T-cell (primary cell): ENCODE measurements at regions of chr13 and their contacts with region 1.

Region 1: DNA sequence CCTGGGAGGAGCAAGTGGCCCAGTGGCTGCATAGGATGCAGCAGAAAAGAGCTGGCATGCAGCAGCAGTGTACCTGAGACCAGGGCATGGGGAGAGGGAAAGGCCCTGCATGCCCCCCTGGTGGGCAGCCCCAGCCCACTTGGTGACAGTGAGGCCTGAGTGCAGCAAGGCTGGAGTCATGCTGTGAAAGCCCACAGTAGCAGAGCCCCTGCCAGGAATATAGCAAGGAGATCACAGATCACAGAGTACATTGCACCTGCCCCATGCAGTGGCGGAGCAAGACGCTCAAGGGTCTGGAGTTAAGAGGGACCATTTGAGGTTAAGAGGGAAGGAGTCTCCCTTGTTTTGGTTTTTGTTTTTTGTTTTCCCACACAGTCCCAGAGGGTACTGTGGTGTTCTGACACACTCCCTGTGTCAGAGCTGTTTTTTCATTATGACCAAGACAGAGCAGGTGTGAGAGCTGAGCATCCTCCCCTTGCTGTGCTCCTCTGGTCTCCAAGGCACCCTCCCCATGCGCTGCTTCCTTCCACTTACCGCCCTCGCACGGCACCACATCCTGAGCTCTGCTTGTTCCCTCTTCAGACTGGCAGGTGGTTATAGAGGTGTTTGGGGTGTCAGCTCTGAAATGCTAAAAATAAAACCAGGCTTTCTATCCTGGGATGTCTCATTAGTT is 85.0 kb upstream of the UBL3 start:
- DNase-seq: peak; percentile 59 to 87 (median 76)
- ATAC-seq: peak; percentile 93 to 95 (median 93)
- H3K4me3 ChIP-seq: peak overlapping the region; percentile 44 to 61
- H3K4me3 Mint-ChIP-seq: peak overlapping the region; percentile 87 to 90 (median 87)
- H3K27ac ChIP-seq: peak overlapping the region; percentile 53
- H3K27ac Mint-ChIP-seq: peak overlapping the region; percentile 92 to 93
- H3K4me1 ChIP-seq: peaks cover 31 to 52% of the 10 kb centered on the region in 2 experiments
- H3K4me1 Mint-ChIP-seq: peaks cover 46 to 59% (median 57%) of the 10 kb centered on the region in 3 donors
- H3K27me3 ChIP-seq: no peaks in the 10 kb centered on the region
- H3K27me3 Mint-ChIP-seq: no peaks in the 10 kb centered on the region

Region 2: GRCh38 chr13:29850224-29850898 is 85.1 kb before region 1 on chr13 and contains the start of gene UBL3:
- CTCF ChIA-PET with region 1: interaction called, 5 to 11 read pairs
- POLR2A ChIA-PET with region 1: interaction called, 8 to 9 read pairs
- DNase-seq: peak; percentile 86 to 97 (median 94)
- ATAC-seq: peak; percentile 92 to 94 (median 92)
- H3K4me3 ChIP-seq: peak within 1 kb of the TSS; percentile 96 to 99
- H3K4me3 Mint-ChIP-seq: peak within 1 kb of the TSS; percentile 93 to 98 (median 97)
- H3K27ac ChIP-seq: peak within 1 kb of the TSS; percentile 94
- H3K27ac Mint-ChIP-seq: peak within 1 kb of the TSS; percentile 98 to 99
- H3K4me1 ChIP-seq: peaks cover 0 to 17% of the 10 kb centered on the region in 2 experiments
- H3K4me1 Mint-ChIP-seq: peaks cover 31 to 33% (median 31%) of the 10 kb centered on the region in 3 donors
- H3K27me3 ChIP-seq: no peaks in the 10 kb centered on the region
- H3K27me3 Mint-ChIP-seq: no peaks in the 10 kb centered on the region
- total RNA-seq, gene UBL3: 32.7 to 42.1 (median 34.6) TPM

Region 3: GRCh38 chr13:29923554-29924481 is 11.6 kb before region 1 on chr13:
- CTCF ChIA-PET with region 1: interaction called, 6 to 14 read pairs
- POLR2A ChIA-PET with region 1: no interaction called
- DNase-seq: peak in 29 of 35 experiments; percentile 4 to 65 (median 29)
- ATAC-seq: peak; percentile 56 to 75 (median 70)
- H3K4me3 ChIP-seq: no peak overlapping the region
- H3K4me3 Mint-ChIP-seq: no peak overlapping the region
- H3K27ac ChIP-seq: no peak overlapping the region
- H3K27ac Mint-ChIP-seq: peak overlapping the region in 1 of 2 donors; percentile 30
- H3K4me1 ChIP-seq: peaks cover 12 to 18% of the 10 kb centered on the region in 2 experiments
- H3K4me1 Mint-ChIP-seq: peaks cover 11 to 27% (median 24%) of the 10 kb centered on the region in 3 donors
- H3K27me3 ChIP-seq: peaks cover 0 to 2% of the 10 kb centered on the region in 2 experiments
- H3K27me3 Mint-ChIP-seq: peaks cover 0 to 2% of the 10 kb centered on the region in 2 donors

Region 4: GRCh38 chr13:29954082-29955028 is 18.9 kb after region 1 on chr13:
- CTCF ChIA-PET with region 1: interaction called, 4 to 25 read pairs
- POLR2A ChIA-PET with region 1: interaction called, 3 to 9 read pairs
- DNase-seq: peak; percentile 29 to 75 (median 50)
- ATAC-seq: peak; percentile 77 to 90 (median 85)
- H3K4me3 ChIP-seq: peak overlapping the region; percentile 7 to 47
- H3K4me3 Mint-ChIP-seq: peak overlapping the region; percentile 72 to 80 (median 74)
- H3K27ac ChIP-seq: peak overlapping the region; percentile 69
- H3K27ac Mint-ChIP-seq: peak overlapping the region; percentile 87 to 88
- H3K4me1 ChIP-seq: peaks cover 34 to 36% of the 10 kb centered on the region in 2 experiments
- H3K4me1 Mint-ChIP-seq: peaks cover 58 to 74% (median 65%) of the 10 kb centered on the region in 3 donors
- H3K27me3 ChIP-seq: no peaks in the 10 kb centered on the region
- H3K27me3 Mint-ChIP-seq: peaks cover 0 to 3% of the 10 kb centered on the region in 2 donors

Region 5: DNA sequence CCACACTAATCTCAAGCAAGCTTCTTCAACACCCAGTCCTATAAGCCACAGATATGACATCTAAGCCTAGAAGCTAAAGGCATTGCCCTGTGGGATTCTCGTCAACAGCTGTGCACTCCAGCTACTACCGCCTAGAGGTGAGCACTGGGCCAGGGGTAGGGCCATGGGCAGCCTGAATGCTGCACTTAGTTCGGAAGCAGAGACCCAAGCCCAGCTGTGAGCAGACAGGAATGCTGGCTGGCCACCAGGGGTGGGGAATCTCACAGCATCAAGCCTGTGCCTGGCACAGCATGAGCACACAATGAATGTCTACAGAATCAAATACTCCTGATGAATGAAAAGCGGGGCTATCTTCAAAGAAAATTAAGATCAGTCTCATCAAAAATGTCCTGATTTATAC is 82.4 kb after region 1 on chr13:
- CTCF ChIA-PET with region 1: no interaction called
- POLR2A ChIA-PET with region 1: no interaction called
- DNase-seq: no peak
- ATAC-seq: no peak
- H3K4me3 ChIP-seq: no peak overlapping the region
- H3K4me3 Mint-ChIP-seq: no peak overlapping the region
- H3K27ac ChIP-seq: no peak overlapping the region
- H3K27ac Mint-ChIP-seq: no peak overlapping the region
- H3K4me1 ChIP-seq: no peaks in the 10 kb centered on the region
- H3K4me1 Mint-ChIP-seq: peaks cover 6 to 8% (median 8%) of the 10 kb centered on the region in 3 donors
- H3K27me3 ChIP-seq: peaks cover 0 to 14% of the 10 kb centered on the region in 2 experiments
- H3K27me3 Mint-ChIP-seq: peaks cover 3 to 6% of the 10 kb centered on the region in 2 donors

Region 6: GRCh38 chr13:30114571-30115256 is 179.3 kb after region 1 on chr13:
- CTCF ChIA-PET with region 1: interaction called, 7 to 33 read pairs
- POLR2A ChIA-PET with region 1: interaction called in 1 of 2 experiments, 4 read pairs
- DNase-seq: peak; percentile 78 to 96 (median 91)
- ATAC-seq: peak; percentile 89 to 95 (median 94)
- H3K4me3 ChIP-seq: peak overlapping the region; percentile 38 to 47
- H3K4me3 Mint-ChIP-seq: peak overlapping the region; percentile 79 to 80 (median 79)
- H3K27ac ChIP-seq: peak overlapping the region; percentile 37
- H3K27ac Mint-ChIP-seq: peak overlapping the region; percentile 49 to 82
- H3K4me1 ChIP-seq: peaks cover 10 to 26% of the 10 kb centered on the region in 2 experiments
- H3K4me1 Mint-ChIP-seq: peaks cover 30 to 38% (median 38%) of the 10 kb centered on the region in 3 donors
- H3K27me3 ChIP-seq: peaks cover 0 to 2% of the 10 kb centered on the region in 2 experiments
- H3K27me3 Mint-ChIP-seq: no peaks in the 10 kb centered on the region

Region 7: DNA sequence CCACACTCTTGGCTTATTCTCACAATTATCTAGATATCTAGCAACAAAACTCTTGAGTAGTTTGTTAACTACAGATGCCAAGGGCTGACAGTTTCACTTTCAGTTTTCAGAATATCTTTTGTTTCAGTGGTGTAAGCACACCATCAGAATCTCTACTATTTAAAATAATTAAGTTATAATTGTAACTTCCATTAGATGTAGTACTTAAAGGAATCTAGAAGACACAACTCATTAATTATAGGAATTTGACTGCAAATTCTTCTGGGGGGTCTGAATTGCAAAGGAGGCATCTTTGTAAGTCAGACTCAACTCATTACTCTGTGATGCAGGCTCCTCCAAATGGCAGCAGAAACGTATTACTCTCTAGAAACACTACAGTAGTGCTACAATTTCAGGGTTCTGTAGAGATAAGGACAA is 637.4 kb after region 1 on chr13:
- CTCF ChIA-PET with region 1: no interaction called
- POLR2A ChIA-PET with region 1: interaction called in 1 of 2 experiments, 12 read pairs
- DNase-seq: peak in 12 of 35 experiments; percentile 6 to 63 (median 18)
- ATAC-seq: peak; percentile 71 to 75 (median 72)
- H3K4me3 ChIP-seq: peak overlapping the region; percentile 38 to 44
- H3K4me3 Mint-ChIP-seq: peak overlapping the region; percentile 69 to 78 (median 71)
- H3K27ac ChIP-seq: peak overlapping the region; percentile 90
- H3K27ac Mint-ChIP-seq: peak overlapping the region; percentile 93 to 95
- H3K4me1 ChIP-seq: peaks cover 11 to 17% of the 10 kb centered on the region in 2 experiments
- H3K4me1 Mint-ChIP-seq: peaks cover 29 to 39% (median 39%) of the 10 kb centered on the region in 3 donors
- H3K27me3 ChIP-seq: no peaks in the 10 kb centered on the region
- H3K27me3 Mint-ChIP-seq: no peaks in the 10 kb centered on the region

Region 8: DNA sequence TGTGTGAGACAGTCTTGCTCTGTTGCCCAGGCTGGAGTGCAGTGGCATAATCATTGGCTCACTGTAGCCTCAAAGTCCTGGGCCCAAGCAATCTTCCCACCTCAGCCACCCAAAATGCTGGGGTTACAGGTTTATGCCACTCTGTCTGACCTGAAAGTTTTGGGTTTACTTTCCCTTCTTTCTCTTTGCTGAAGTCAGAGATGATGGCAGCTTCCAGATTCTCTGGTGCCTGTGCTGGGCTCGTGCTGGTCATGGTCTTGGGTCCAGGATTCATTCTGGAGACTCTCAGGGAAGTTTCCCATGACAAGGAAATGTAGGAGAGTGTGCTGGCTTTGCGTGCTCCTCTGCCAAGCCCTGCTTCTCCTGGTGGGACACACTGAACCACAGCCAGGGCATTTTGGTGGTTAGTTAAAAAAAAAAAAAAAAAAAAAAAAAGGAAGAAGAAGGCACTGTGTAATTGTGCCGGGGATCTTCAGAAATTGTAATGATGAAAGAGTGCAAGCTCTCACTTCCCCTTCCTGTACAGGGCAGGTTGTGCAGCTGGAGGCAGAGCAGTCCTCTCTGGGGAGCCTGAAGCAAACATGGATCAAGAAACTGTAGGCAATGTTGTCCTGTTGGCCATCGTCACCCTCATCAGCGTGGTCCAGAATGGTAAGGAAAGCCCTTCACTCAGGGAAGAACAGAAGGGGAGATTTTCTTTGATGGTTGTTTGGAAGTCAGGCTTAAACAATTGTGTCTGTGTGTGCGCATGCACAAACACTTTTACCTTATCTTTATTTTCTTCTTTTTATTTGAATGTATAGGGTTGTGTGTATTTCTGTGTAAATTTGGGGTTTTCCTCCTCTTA is 799.8 kb after region 1 on chr13 and contains the start of gene ALOX5AP:
- CTCF ChIA-PET with region 1: no interaction called
- POLR2A ChIA-PET with region 1: interaction called in 1 of 2 experiments, 10 read pairs
- DNase-seq: peak in 32 of 35 experiments; percentile 18 to 64 (median 31)
- ATAC-seq: peak; percentile 49 to 73 (median 64)
- H3K4me3 ChIP-seq: peak within 1 kb of the TSS; percentile 43 to 67
- H3K4me3 Mint-ChIP-seq: peak within 1 kb of the TSS; percentile 78 to 96 (median 94)
- H3K27ac ChIP-seq: peak within 1 kb of the TSS; percentile 72
- H3K27ac Mint-ChIP-seq: peak within 1 kb of the TSS; percentile 98 to 99
- H3K4me1 ChIP-seq: peaks cover 25 to 46% of the 10 kb centered on the region in 2 experiments
- H3K4me1 Mint-ChIP-seq: peaks cover 65 to 69% (median 68%) of the 10 kb centered on the region in 3 donors
- H3K27me3 ChIP-seq: peaks cover 0 to 11% of the 10 kb centered on the region in 2 experiments
- H3K27me3 Mint-ChIP-seq: no peaks in the 10 kb centered on the region
- total RNA-seq, gene ALOX5AP: 24.2 to 64.9 (median 50.8) TPM